ENCODE measurements at regions of chr5 and their contacts with region 1.

Region 1: GRCh38 chr5:69093771-69094482 is at the start of gene SLC30A5:
- DNase-seq: peak; percentile 99
- ATAC-seq: peak; percentile 100
- H3K4me3 Mint-ChIP-seq: peak within 1 kb of the TSS; percentile 90
- H3K27ac Mint-ChIP-seq: peak within 1 kb of the TSS; percentile 93
- H3K4me1 Mint-ChIP-seq: peaks cover 27% of the 10 kb centered on the region
- H3K27me3 Mint-ChIP-seq: no peaks in the 10 kb centered on the region
- total RNA-seq, gene SLC30A5: 44.1 to 45.1 TPM

Region 2: DNA sequence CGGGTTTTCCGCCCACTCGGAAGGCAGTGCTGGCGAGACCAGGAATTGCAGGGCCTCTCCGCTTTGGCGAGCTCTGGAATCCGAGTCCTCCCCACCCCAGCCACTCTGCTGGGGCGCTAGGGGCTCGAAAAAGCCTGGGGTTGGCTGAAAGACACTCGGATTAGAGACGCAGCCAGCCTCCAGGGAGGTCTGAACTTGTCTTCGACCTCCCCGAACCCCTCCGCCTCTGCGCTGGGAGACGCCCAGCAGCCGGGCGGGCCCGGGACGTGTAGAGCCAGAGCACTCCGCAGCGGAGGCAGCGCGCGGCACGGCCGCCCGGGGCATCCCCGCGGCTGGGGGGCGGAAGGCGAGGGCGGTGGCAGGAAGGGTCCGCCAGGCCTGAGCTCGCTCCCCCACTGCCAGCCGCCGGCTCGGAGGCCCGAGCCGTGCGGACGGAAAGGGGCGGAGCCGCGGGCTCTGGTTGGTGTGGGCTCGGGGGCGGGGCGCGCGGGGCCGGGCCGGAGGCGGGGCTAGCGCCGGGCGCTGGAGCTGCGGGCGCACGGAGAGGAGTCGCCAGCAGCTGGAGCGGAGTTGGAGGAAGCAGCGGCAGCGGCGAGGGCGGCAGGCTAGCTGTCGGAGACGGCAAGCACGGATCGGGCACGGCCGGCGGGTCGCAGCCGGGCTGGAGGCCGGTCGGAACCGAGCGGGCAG is 878.6 kb before region 1 on chr5 and contains the start of gene PIK3R1:
- CTCF ChIA-PET with region 1: no interaction called
- POLR2A ChIA-PET with region 1: no interaction called
- intact Hi-C with region 1: loop called in 1 of 2 experiments (anchors 1 kb)
- DNase-seq: peak; percentile 96
- ATAC-seq: peak; percentile 85
- H3K4me3 Mint-ChIP-seq: peak within 1 kb of the TSS; percentile 83
- H3K27ac Mint-ChIP-seq: peak within 1 kb of the TSS; percentile 97
- H3K4me1 Mint-ChIP-seq: peaks cover 45% of the 10 kb centered on the region
- H3K27me3 Mint-ChIP-seq: no peaks in the 10 kb centered on the region
- total RNA-seq, gene PIK3R1: 40.0 to 49.0 TPM

Region 3: DNA sequence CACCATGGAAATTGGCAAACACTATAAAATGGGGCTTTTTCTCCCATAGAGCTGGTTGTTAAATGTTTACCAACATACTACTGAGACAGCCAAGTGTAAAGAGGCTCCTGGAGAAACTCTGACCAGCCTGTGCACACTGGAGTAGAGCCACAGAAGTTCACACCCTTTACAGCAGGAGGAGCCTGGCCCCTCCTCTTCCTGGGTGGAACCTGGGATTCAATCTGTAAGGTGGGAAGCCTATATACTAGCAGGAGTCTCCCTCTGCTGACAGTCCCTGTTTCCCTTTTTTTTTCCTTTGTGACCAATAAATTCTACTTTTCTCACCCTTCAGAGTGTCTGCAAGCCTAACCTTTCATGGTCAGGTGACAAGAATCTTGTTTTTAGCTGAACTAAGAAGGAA is 10.5 kb before region 1 on chr5:
- CTCF ChIA-PET with region 1: interaction called, 31 read pairs
- POLR2A ChIA-PET with region 1: interaction called, 4 read pairs
- intact Hi-C with region 1: no loop called
- DNase-seq: no peak
- ATAC-seq: no peak
- H3K4me3 Mint-ChIP-seq: no peak overlapping the region
- H3K27ac Mint-ChIP-seq: no peak overlapping the region
- H3K4me1 Mint-ChIP-seq: peaks cover 16% of the 10 kb centered on the region
- H3K27me3 Mint-ChIP-seq: no peaks in the 10 kb centered on the region

Region 4: DNA sequence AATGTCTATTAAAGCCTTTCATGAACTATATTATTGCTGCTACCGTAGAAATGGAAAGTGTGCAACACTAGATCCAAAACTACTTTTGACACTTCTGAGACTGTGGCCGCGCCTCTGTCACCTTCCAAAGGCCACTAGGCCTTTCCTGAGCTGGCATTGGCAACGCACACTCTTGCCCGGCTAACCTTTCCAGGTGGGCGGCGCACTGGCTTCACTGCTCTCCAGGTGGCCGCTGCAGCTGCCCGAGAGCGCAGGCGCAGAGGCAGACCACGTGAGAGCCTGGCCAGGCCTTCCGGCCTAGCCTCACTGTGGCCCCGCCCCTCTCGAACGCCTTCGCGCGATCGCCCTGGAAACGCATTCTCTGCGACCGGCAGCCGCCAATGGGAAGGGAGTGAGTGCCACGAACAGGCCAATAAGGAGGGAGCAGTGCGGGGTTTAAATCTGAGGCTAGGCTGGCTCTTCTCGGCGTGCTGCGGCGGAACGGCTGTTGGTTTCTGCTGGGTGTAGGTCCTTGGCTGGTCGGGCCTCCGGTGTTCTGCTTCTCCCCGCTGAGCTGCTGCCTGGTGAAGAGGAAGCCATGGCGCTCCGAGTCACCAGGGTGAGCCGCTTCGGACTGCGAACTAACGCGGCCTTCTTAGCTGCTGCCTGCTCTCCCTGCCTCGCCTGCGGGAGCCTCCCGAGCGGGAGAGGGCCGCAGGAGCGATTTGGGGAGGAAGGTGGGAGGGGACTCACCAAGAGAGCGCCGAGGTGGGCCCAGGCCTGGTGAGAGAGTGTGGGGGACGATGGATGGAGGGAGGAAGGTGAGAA is 73.0 kb after region 1 on chr5 and contains the start of gene CCNB1:
- CTCF ChIA-PET with region 1: interaction called, 6 read pairs
- POLR2A ChIA-PET with region 1: no interaction called
- intact Hi-C with region 1: loop called in 1 of 2 experiments (anchors 1 kb)
- DNase-seq: peak; percentile 99
- ATAC-seq: peak; percentile 100
- H3K4me3 Mint-ChIP-seq: peak within 1 kb of the TSS; percentile 94
- H3K27ac Mint-ChIP-seq: peak within 1 kb of the TSS; percentile 81
- H3K4me1 Mint-ChIP-seq: peaks cover 17% of the 10 kb centered on the region
- H3K27me3 Mint-ChIP-seq: no peaks in the 10 kb centered on the region
- total RNA-seq, gene CCNB1: 163 to 205 TPM

Region 5: DNA sequence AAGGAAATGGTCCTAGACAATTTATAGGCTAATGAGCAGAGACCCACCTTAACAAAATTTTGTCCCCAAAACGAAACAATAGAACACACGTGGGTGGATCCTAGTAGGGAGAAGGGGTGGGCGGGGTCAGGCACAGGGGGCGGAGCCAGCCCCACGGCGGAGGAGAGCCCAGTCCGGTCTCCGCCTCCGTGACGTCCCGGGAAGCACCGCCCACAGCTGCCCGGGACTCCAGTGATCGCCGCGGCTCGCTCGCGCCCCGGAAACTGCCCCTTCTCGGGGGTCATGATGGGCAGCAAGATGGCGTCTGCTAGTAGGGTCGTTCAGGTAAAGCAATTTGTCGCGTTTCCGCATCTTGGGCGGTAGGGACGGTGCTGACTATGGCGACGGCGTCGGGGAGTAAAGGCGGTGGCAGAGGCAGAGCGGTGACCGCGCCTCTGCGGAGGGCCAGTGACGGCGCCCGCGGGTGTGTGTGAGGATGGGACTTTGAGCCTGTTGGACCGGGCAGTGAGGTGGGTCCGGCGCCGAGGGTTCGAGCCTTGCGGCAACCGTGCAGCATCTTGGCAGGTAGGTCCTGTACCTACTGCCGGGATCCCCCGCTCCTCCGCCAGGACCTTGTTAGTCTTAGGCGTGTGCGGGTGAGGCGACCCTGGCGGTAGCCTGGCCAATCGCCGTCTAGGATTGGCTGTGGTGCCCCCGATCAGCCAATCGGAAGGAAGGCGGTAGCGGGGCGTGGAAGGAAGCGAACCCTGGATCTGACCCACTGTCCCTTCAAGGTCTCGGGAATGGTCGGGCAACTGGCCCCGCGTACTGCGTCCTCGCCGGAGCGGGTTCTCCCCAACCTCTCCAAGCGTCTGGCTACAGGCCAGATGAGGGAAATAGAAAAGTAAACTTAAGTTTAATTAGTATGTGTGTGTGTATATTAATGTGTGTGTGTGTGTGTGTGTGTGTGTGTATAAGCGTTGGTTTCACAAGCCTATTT is 123.9 kb after region 1 on chr5:
- CTCF ChIA-PET with region 1: interaction called, 6 read pairs
- POLR2A ChIA-PET with region 1: interaction called, 3 read pairs
- intact Hi-C with region 1: loop called in 1 of 2 experiments (anchors 1 kb)
- DNase-seq: peak; percentile 97
- ATAC-seq: peak; percentile 93
- H3K4me3 Mint-ChIP-seq: peak overlapping the region; percentile 91
- H3K27ac Mint-ChIP-seq: peak overlapping the region; percentile 95
- H3K4me1 Mint-ChIP-seq: peaks cover 18% of the 10 kb centered on the region
- H3K27me3 Mint-ChIP-seq: no peaks in the 10 kb centered on the region

Region 6: GRCh38 chr5:69334793-69335268 is 240.9 kb after region 1 on chr5:
- CTCF ChIA-PET with region 1: interaction called, 8 read pairs
- POLR2A ChIA-PET with region 1: no interaction called
- intact Hi-C with region 1: loop called (anchors 1 to 2 kb)
- DNase-seq: peak; percentile 91
- ATAC-seq: peak; percentile 78
- H3K4me3 Mint-ChIP-seq: no peak overlapping the region
- H3K27ac Mint-ChIP-seq: no peak overlapping the region
- H3K4me1 Mint-ChIP-seq: peaks cover 15% of the 10 kb centered on the region
- H3K27me3 Mint-ChIP-seq: no peaks in the 10 kb centered on the region